Panc1 (cell line): ENCODE measurements at regions of chr17 and their contacts with region 1.

Region 1: DNA sequence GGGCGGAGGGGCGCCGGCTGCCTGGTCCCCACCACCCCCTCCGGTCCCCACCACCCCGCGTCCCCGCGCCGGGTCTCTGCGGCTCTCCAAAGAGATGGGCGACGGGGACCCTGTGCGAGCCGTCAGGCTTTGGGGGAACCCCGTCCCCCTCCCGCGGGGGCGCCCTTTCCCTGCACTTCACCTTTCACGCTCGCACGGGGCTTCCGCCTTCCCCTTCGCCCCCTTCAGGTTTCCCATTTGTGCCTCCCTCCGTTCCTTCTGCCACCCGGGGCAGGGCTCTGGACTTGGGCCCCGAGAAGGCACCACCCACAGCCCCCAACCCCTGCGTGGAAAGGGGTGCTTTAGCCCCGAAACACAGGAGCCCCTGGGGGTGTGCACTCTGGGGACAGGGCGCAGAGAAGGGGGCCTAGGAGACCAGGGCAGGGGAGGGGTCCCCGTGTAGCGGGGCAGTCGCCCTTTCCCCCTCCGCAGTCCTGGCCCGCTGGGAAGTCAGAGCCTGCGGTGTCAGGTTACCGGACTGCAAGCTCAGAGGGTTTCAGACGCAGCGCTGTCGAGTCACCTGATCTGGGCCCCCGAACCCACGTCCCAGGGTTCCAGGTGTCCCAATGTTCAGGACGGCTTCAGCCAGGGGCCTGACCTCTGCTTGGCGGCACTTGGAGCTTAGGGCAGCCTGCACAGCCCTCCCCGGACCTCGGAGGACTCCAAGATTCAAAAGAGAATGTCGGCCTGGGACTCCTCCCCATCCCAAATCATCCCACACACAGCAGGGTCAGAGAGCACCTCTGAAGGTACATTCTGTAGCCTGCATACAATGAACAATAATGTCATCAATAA is 6.7 kb upstream of the CCDC92B start:
- DNase-seq: no peak
- ATAC-seq: peak; percentile 75
- H3K4me3 ChIP-seq: peak overlapping the region; percentile 37 to 40
- H3K27ac ChIP-seq: no peak overlapping the region
- H3K4me1 ChIP-seq: no peaks in the 10 kb centered on the region
- H3K27me3 ChIP-seq: no peaks in the 10 kb centered on the region; the same call in 1 of the 2 replicates
- CTCF ChIP-seq: no peak

Region 2: GRCh38 chr17:2468270-2468669 is 287.8 kb before region 1 on chr17:
- CTCF ChIA-PET with region 1: no interaction called
- POLR2A ChIA-PET with region 1: no interaction called
- in situ Hi-C with region 1: no loop called
- intact Hi-C with region 1: no loop called
- DNase-seq: no peak
- ATAC-seq: no peak
- H3K4me3 ChIP-seq: no peak overlapping the region
- H3K27ac ChIP-seq: no peak overlapping the region
- H3K4me1 ChIP-seq: no peaks in the 10 kb centered on the region
- H3K27me3 ChIP-seq: no peaks in the 10 kb centered on the region
- CTCF ChIP-seq: no peak

Region 3: GRCh38 chr17:2778489-2778888 is 22.4 kb after region 1 on chr17:
- CTCF ChIA-PET with region 1: no interaction called
- POLR2A ChIA-PET with region 1: interaction called, 10 read pairs
- in situ Hi-C with region 1: no loop called
- intact Hi-C with region 1: no loop called
- DNase-seq: no peak
- ATAC-seq: no peak
- H3K4me3 ChIP-seq: no peak overlapping the region
- H3K27ac ChIP-seq: no peak overlapping the region
- H3K4me1 ChIP-seq: no peaks in the 10 kb centered on the region
- H3K27me3 ChIP-seq: no peaks in the 10 kb centered on the region
- CTCF ChIP-seq: no peak